ENCODE measurements at regions of chr21 and their contacts with region 1.

Region 1: DNA sequence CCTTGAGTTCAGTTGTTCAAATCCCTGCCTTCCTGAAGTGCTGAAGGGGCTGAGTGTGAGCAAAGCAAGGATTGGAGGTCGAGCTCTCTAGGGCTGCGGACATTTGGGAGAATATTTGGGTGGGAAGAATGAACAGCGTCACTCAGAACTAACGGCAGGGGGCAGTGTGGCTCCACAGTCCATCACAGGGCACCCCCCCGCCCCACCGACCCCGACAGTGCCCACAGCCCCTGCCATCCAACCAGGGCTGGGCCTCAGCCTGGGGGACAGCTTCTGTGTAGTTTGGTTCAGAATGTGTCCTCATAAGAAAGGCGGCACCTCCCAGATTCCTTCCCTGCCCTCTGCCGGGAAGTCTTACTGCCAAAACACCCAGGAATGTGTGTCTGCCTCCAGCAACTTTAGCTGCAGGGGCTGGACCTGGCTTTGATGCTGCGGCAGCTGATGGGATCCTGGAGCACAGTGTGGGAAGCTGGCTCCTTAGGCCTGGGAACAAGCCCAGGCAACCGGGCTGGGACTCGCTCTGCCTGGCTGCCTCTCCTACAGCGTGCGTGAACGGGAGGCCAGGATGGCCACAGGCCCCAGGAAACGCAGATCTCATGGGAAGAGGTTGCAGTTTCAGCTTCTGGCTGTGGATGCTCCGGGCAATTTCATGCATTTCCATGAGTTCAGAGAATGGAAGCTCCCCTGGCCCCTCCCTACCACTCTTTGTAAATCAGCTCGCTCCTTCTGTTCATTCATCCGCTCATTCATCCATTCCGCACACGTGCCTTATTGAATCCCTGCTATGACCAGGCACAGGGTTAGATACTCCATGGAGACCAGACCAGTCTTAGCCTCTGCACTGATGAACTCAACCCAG is 104.9 kb upstream of the TMPRSS2 start:
- DNase-seq: no peak
- ATAC-seq: peak; percentile 87
- H3K4me3 ChIP-seq: no peak overlapping the region; a peak in 1 of 4 replicates
- H3K27ac ChIP-seq: no peak overlapping the region
- H3K4me1 ChIP-seq: peaks cover 10 to 12% of the 10 kb centered on the region in 2 experiments; a peak in 3 of 4 replicates
- H3K27me3 ChIP-seq: peaks cover 6% of the 10 kb centered on the region; the same call in 1 of the 2 replicates
- CTCF ChIP-seq: peak; percentile 68 to 72 (median 68)
- POLR2A ChIP-seq: no peak
- RAD21 ChIP-seq: peak; percentile 83

Region 2: GRCh38 chr21:41283211-41283818 is 329.6 kb before region 1 on chr21:
- CTCF ChIA-PET with region 1: interaction called, 82 read pairs
- POLR2A ChIA-PET with region 1: no interaction called
- RAD21 ChIA-PET with region 1: interaction called, 12 to 14 read pairs
- intact Hi-C with region 1: loop called (anchors 1 kb)
- DNase-seq: peak; percentile 39
- ATAC-seq: peak; percentile 94
- H3K4me3 ChIP-seq: no peak overlapping the region
- H3K27ac ChIP-seq: no peak overlapping the region
- H3K4me1 ChIP-seq: no peaks in the 10 kb centered on the region
- H3K27me3 ChIP-seq: peaks cover 5% of the 10 kb centered on the region; the same call in 1 of the 2 replicates
- CTCF ChIP-seq: peak; percentile 48 to 81 (median 73); a peak in 5 of 6 replicates
- POLR2A ChIP-seq: no peak
- RAD21 ChIP-seq: peak; percentile 76

Region 3: DNA sequence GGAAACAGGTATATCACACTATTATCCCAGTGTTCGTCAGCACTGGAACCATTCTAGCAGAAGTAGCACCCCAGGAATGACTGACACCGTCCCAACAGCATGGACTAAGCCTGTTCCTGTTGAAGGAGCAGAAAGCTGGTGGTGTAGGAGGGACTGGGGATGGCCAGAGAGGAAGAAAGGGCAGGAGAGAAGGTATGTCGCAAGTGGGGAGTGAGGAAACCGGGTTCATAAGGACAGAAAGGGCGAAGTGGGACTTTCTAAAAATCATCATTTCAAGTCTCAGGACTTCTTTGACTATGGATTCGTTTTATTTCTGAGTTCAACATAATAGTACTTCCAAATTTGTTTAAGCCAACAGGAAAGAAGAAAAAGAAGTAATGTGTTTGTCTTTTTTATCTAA is 206.6 kb before region 1 on chr21:
- CTCF ChIA-PET with region 1: no interaction called
- POLR2A ChIA-PET with region 1: no interaction called
- RAD21 ChIA-PET with region 1: no interaction called
- intact Hi-C with region 1: no loop called
- DNase-seq: no peak
- ATAC-seq: no peak
- H3K4me3 ChIP-seq: no peak overlapping the region
- H3K27ac ChIP-seq: no peak overlapping the region
- H3K4me1 ChIP-seq: peaks cover 0 to 3% of the 10 kb centered on the region in 2 experiments; a peak in 2 of 4 replicates
- H3K27me3 ChIP-seq: peaks cover 29% of the 10 kb centered on the region
- CTCF ChIP-seq: no peak
- POLR2A ChIP-seq: no peak
- RAD21 ChIP-seq: no peak

Region 4: DNA sequence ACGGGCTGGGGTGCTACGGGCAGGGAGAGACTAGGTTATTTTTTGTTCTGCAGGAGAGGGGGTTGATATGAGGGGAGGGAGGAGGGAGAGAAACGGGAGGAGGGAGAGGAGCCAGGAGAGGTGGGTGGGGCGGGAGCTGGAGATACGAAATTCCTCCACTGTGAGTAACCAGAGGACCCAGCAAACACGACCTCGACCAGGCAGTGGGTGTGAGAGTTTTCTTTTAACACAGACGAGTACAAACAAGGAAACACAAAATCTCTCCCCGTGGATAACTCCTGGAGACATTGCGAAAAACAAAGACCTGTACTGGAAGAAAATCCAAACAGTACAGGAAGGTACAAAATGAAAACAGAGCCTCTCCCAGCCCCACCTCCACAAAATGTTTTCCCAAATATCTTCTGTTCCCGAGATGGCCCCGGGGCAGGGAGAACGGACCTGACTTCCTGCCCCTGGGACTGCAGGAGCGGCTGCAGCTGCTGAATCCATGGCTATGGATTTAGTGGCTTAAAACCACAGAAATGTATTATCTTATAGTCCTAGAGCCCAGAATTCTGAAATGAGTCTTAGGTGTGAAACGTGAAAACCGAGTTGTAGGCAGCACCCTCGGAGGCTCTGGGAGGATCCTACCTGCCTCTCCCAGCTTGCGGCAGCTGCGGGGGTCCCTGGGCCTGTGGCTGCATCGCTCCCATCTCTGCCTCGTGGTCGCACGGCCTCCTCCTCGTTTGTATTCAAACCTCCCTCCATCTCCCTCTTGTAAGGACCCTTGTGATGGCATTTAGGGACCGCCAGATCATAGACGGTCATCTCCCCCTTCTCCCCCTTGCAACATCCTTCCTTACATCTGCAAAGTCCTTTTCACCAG is 71.7 kb after region 1 on chr21:
- CTCF ChIA-PET with region 1: no interaction called
- POLR2A ChIA-PET with region 1: no interaction called
- RAD21 ChIA-PET with region 1: no interaction called
- intact Hi-C with region 1: no loop called
- DNase-seq: no peak
- ATAC-seq: peak; percentile 66
- H3K4me3 ChIP-seq: peak overlapping the region in 1 of 2 experiments; percentile 2; a peak in 1 of 4 replicates
- H3K27ac ChIP-seq: no peak overlapping the region; the same call in 1 of the 2 replicates
- H3K4me1 ChIP-seq: peaks cover 19 to 32% of the 10 kb centered on the region in 2 experiments
- H3K27me3 ChIP-seq: no peaks in the 10 kb centered on the region
- CTCF ChIP-seq: no peak
- POLR2A ChIP-seq: no peak
- RAD21 ChIP-seq: no peak

Region 5: DNA sequence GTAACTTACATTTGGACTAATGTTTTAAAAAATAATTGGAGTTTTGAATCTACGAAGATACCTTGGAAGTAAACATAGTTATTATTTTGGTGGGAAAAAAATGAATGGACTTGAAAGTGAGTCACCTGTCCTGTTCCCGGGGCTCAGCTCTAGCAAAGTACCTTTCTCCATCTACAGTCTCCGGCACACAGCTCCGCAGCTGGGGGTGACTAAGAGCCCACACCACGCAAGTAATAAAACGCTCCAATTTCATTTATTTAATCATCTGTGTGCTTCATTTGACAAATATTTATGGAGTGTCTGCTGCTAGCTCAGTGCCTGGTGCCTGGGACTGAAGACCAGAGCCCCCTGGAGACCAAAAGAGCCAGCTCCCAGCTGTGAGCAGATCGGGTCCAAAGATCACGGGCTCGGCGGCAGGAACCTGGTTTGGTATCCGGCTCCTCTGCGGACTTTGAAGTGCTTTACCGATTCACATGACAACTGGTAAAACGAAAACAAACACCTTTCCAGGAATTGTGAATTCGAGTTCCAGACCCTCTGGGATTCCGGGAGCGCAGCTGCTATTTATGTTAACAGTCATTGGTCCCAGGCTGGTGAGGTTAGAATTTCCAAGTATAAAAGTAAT is 155.6 kb after region 1 on chr21:
- CTCF ChIA-PET with region 1: interaction called, 28 read pairs
- POLR2A ChIA-PET with region 1: interaction called, 5 read pairs
- RAD21 ChIA-PET with region 1: interaction called, 3 to 13 read pairs
- intact Hi-C with region 1: no loop called
- DNase-seq: peak; percentile 32
- ATAC-seq: peak; percentile 51
- H3K4me3 ChIP-seq: peak overlapping the region; percentile 74 to 81
- H3K27ac ChIP-seq: no peak overlapping the region
- H3K4me1 ChIP-seq: peaks cover 33 to 39% of the 10 kb centered on the region in 2 experiments
- H3K27me3 ChIP-seq: peaks cover 37% of the 10 kb centered on the region
- CTCF ChIP-seq: peak in 2 of 3 experiments; percentile 39 to 55; a peak in 4 of 6 replicates
- POLR2A ChIP-seq: no peak
- RAD21 ChIP-seq: peak; percentile 52

Region 6: GRCh38 chr21:41783441-41784161 is 170.7 kb after region 1 on chr21:
- CTCF ChIA-PET with region 1: interaction called, 73 read pairs
- POLR2A ChIA-PET with region 1: interaction called, 4 read pairs
- RAD21 ChIA-PET with region 1: interaction called, 14 to 24 read pairs
- intact Hi-C with region 1: loop called (anchors 1 kb)
- DNase-seq: peak; percentile 79
- ATAC-seq: peak; percentile 82
- H3K4me3 ChIP-seq: peak overlapping the region in 1 of 2 experiments; percentile 0; a peak in 1 of 4 replicates
- H3K27ac ChIP-seq: no peak overlapping the region
- H3K4me1 ChIP-seq: peaks cover 23 to 35% of the 10 kb centered on the region in 2 experiments
- H3K27me3 ChIP-seq: peaks cover 78% of the 10 kb centered on the region
- CTCF ChIP-seq: no peak
- POLR2A ChIP-seq: no peak
- RAD21 ChIP-seq: no peak

Region 7: GRCh38 chr21:41933313-41934086 is 320.6 kb after region 1 on chr21:
- CTCF ChIA-PET with region 1: interaction called, 10 read pairs
- POLR2A ChIA-PET with region 1: no interaction called
- RAD21 ChIA-PET with region 1: interaction called in 1 of 2 experiments, 3 read pairs
- intact Hi-C with region 1: loop called (anchors 2 kb)
- DNase-seq: no peak
- ATAC-seq: no peak
- H3K4me3 ChIP-seq: peak overlapping the region in 1 of 2 experiments; percentile 48; a peak in 2 of 4 replicates
- H3K27ac ChIP-seq: peak overlapping the region; percentile 75
- H3K4me1 ChIP-seq: peaks cover 40 to 46% of the 10 kb centered on the region in 2 experiments
- H3K27me3 ChIP-seq: no peaks in the 10 kb centered on the region
- CTCF ChIP-seq: no peak
- POLR2A ChIP-seq: no peak
- RAD21 ChIP-seq: no peak

Region 8: GRCh38 chr21:42449296-42449927 is 836.5 kb after region 1 on chr21:
- CTCF ChIA-PET with region 1: no interaction called
- POLR2A ChIA-PET with region 1: no interaction called
- RAD21 ChIA-PET with region 1: no interaction called
- intact Hi-C with region 1: loop called (anchors 5 kb)
- DNase-seq: no peak
- ATAC-seq: peak; percentile 28
- H3K4me3 ChIP-seq: no peak overlapping the region
- H3K27ac ChIP-seq: no peak overlapping the region
- H3K4me1 ChIP-seq: peaks cover 6 to 13% of the 10 kb centered on the region in 2 experiments
- H3K27me3 ChIP-seq: no peaks in the 10 kb centered on the region
- CTCF ChIP-seq: no peak
- POLR2A ChIP-seq: no peak
- RAD21 ChIP-seq: no peak

Measured in HCT116 (cell line).